IMR-90 (cell line): ENCODE measurements at regions of chr3 and their contacts with region 1.

Region 1: GRCh38 chr3:43879166-43879565 is 188.4 kb downstream of the ABHD5 start:
- DNase-seq: no peak
- ATAC-seq: no peak
- H3K4me3 ChIP-seq: no peak overlapping the region
- H3K27ac ChIP-seq: no peak overlapping the region
- H3K4me1 ChIP-seq: no peaks in the 10 kb centered on the region
- H3K27me3 ChIP-seq: no peaks in the 10 kb centered on the region
- CTCF ChIP-seq: 0 out of 2 replicates have a peak, but pooled peaks have one; percentile 19
- POLR2A ChIP-seq: no peak
- RAD21 ChIP-seq: no peak

Region 2: DNA sequence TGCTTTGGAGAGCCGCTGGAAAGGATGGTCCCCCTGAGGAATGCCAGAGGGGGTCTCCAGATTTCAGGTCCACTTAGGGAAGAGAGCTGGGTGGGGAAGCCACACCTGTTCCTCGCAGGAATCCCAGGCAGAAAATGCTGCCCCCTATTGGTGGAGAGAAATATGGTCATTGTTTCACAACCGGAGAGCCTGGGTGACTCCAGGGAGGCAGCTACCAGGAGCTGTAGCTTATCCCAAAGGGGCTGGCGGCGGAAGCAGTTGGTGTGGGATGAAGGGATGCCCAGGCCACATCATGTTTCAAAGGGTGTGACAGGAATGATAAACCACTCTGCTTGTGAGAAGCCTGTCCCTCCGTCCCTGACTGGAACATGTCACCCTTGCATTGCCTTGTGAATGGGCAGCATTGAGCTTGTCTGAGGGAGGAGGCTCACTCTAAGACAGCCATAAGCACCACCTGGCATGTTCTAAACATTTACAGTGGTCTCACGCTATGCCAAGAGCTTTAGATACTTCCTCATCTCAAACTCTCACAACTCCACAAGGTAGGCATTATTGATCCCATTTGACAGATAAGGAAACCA is 807.8 kb before region 1 on chr3:
- CTCF ChIA-PET with region 1: no interaction called
- POLR2A ChIA-PET with region 1: no interaction called
- dilution Hi-C with region 1: no loop called
- in situ Hi-C with region 1: no loop called
- intact Hi-C with region 1: no loop called
- DNase-seq: no peak
- ATAC-seq: no peak
- H3K4me3 ChIP-seq: no peak overlapping the region
- H3K27ac ChIP-seq: no peak overlapping the region
- H3K4me1 ChIP-seq: no peaks in the 10 kb centered on the region
- H3K27me3 ChIP-seq: no peaks in the 10 kb centered on the region
- CTCF ChIP-seq: 0 out of 2 replicates have a peak, but pooled peaks have one; percentile 12
- POLR2A ChIP-seq: no peak
- RAD21 ChIP-seq: no peak

Region 3: GRCh38 chr3:43597961-43598360 is 281.2 kb before region 1 on chr3:
- CTCF ChIA-PET with region 1: no interaction called
- POLR2A ChIA-PET with region 1: no interaction called
- dilution Hi-C with region 1: no loop called
- in situ Hi-C with region 1: no loop called
- intact Hi-C with region 1: no loop called
- DNase-seq: no peak
- ATAC-seq: no peak
- H3K4me3 ChIP-seq: no peak overlapping the region
- H3K27ac ChIP-seq: no peak overlapping the region
- H3K4me1 ChIP-seq: no peaks in the 10 kb centered on the region
- H3K27me3 ChIP-seq: no peaks in the 10 kb centered on the region
- CTCF ChIP-seq: no peak
- POLR2A ChIP-seq: no peak
- RAD21 ChIP-seq: no peak

Region 4: GRCh38 chr3:43792904-43793303 is 86.3 kb before region 1 on chr3:
- CTCF ChIA-PET with region 1: no interaction called
- POLR2A ChIA-PET with region 1: no interaction called
- dilution Hi-C with region 1: no loop called
- in situ Hi-C with region 1: no loop called
- intact Hi-C with region 1: no loop called
- DNase-seq: no peak
- ATAC-seq: no peak
- H3K4me3 ChIP-seq: no peak overlapping the region
- H3K27ac ChIP-seq: no peak overlapping the region
- H3K4me1 ChIP-seq: no peaks in the 10 kb centered on the region; the same call in 1 of the 2 replicates
- H3K27me3 ChIP-seq: peaks cover 26% of the 10 kb centered on the region
- CTCF ChIP-seq: no peak
- POLR2A ChIP-seq: no peak
- RAD21 ChIP-seq: no peak

Region 5: DNA sequence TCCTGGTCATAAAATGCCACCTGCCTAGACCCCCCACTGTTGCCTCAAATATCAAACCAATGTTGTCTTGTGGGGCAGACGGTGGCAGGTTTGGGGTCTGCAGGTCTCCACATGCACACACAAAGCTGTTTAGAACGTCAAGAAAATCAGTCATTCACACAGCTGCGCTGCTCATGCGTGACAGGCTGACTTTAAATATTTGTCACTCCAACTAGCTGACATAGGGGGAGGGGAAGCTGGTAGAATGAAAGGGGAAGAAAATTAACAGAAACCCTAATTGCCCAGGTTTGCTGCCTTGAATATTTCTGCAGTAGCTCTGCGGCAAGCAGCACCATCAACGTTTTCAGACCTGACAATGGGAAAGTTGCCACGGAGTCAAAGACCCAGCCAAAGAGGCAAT is 13.4 kb after region 1 on chr3:
- CTCF ChIA-PET with region 1: interaction called, 15 read pairs
- POLR2A ChIA-PET with region 1: no interaction called
- dilution Hi-C with region 1: no loop called
- in situ Hi-C with region 1: no loop called
- intact Hi-C with region 1: no loop called
- DNase-seq: no peak
- ATAC-seq: no peak
- H3K4me3 ChIP-seq: no peak overlapping the region
- H3K27ac ChIP-seq: no peak overlapping the region
- H3K4me1 ChIP-seq: peaks cover 3% of the 10 kb centered on the region
- H3K27me3 ChIP-seq: peaks cover 25% of the 10 kb centered on the region
- CTCF ChIP-seq: no peak
- POLR2A ChIP-seq: no peak
- RAD21 ChIP-seq: no peak

Region 6: GRCh38 chr3:44387404-44387803 is 508.2 kb after region 1 on chr3:
- CTCF ChIA-PET with region 1: no interaction called
- POLR2A ChIA-PET with region 1: no interaction called
- dilution Hi-C with region 1: no loop called
- in situ Hi-C with region 1: no loop called
- intact Hi-C with region 1: no loop called
- DNase-seq: no peak
- ATAC-seq: no peak
- H3K4me3 ChIP-seq: no peak overlapping the region
- H3K27ac ChIP-seq: no peak overlapping the region
- H3K4me1 ChIP-seq: no peaks in the 10 kb centered on the region
- H3K27me3 ChIP-seq: no peaks in the 10 kb centered on the region
- CTCF ChIP-seq: no peak
- POLR2A ChIP-seq: no peak
- RAD21 ChIP-seq: no peak